CD4-positive, alpha-beta T cell (primary cell): ENCODE measurements at regions of chr19 and their contacts with region 1.

Region 1: DNA sequence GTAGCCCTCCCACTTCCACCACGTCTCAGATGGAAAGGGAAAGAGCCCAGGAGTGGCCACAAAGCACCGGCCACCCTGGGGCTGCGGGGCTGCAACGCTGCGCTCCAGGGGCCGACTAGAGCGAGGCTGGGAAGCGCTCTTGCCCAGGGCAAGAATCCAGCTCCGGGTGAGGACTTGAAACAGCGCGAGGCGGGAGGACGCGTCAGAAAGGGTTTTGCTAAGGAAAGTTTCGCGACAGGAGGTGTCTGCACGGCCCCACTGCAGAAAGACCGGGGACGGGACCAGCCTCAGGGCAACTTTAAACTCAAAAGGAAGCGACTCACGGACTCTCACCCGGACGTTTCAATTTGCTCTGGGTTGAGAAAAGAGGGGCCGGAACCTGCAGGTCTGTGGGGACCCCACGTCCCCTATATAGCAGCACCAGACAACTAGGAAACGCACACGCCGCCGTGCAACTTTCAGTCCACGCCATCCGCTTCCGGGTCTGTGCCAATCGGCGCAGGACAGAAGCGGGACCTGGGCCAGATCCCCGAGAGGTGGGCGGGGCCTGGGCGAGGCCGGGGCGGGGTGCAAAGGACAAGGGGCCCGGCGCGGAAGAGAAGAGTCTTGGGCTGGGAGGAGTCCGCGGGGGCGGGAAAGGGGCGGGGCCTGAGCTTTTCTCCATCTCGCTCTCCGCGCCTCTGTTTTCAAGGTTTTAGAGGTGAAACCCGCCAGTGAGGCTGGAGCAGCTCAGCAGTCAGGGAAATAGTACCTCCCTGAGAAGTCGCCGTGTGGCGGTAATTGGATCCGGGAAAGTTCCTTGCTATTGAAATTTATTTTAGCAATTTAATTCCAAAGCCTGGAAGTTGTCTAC is at the start of gene ZNF816:
- DNase-seq: peak; percentile 97 to 100 (median 99)
- ATAC-seq: peak; percentile 99
- H3K4me3 ChIP-seq: peak within 1 kb of the TSS; percentile 78
- H3K4me3 Mint-ChIP-seq: peak within 1 kb of the TSS; percentile 97
- H3K27ac ChIP-seq: peak within 1 kb of the TSS; percentile 63 to 68
- H3K27ac Mint-ChIP-seq: peak within 1 kb of the TSS; percentile 97
- H3K4me1 ChIP-seq: peaks cover 20% of the 10 kb centered on the region
- H3K4me1 Mint-ChIP-seq: peaks cover 36% of the 10 kb centered on the region
- H3K27me3 ChIP-seq: no peaks in the 10 kb centered on the region
- H3K27me3 Mint-ChIP-seq: no peaks in the 10 kb centered on the region
- CTCF ChIP-seq: no peak
- total RNA-seq, gene ZNF816: 3.6 to 5.5 TPM

Region 2: GRCh38 chr19:52897144-52897935 is 65.3 kb before region 1 on chr19 and contains the start of gene ZNF320:
- CTCF ChIA-PET with region 1: no interaction called
- POLR2A ChIA-PET with region 1: interaction called, 7 read pairs
- intact Hi-C with region 1: loop called (anchors 1 to 10 kb)
- DNase-seq: peak; percentile 77 to 95 (median 86)
- ATAC-seq: peak; percentile 100
- H3K4me3 ChIP-seq: peak within 1 kb of the TSS; percentile 73
- H3K4me3 Mint-ChIP-seq: peak within 1 kb of the TSS; percentile 93
- H3K27ac ChIP-seq: peak within 1 kb of the TSS; percentile 14 to 77
- H3K27ac Mint-ChIP-seq: peak within 1 kb of the TSS; percentile 87
- H3K4me1 ChIP-seq: peaks cover 16% of the 10 kb centered on the region
- H3K4me1 Mint-ChIP-seq: peaks cover 36% of the 10 kb centered on the region
- H3K27me3 ChIP-seq: no peaks in the 10 kb centered on the region
- H3K27me3 Mint-ChIP-seq: no peaks in the 10 kb centered on the region
- CTCF ChIP-seq: no peak
- total RNA-seq, gene ZNF320: 7.2 to 7.4 TPM

Region 3: DNA sequence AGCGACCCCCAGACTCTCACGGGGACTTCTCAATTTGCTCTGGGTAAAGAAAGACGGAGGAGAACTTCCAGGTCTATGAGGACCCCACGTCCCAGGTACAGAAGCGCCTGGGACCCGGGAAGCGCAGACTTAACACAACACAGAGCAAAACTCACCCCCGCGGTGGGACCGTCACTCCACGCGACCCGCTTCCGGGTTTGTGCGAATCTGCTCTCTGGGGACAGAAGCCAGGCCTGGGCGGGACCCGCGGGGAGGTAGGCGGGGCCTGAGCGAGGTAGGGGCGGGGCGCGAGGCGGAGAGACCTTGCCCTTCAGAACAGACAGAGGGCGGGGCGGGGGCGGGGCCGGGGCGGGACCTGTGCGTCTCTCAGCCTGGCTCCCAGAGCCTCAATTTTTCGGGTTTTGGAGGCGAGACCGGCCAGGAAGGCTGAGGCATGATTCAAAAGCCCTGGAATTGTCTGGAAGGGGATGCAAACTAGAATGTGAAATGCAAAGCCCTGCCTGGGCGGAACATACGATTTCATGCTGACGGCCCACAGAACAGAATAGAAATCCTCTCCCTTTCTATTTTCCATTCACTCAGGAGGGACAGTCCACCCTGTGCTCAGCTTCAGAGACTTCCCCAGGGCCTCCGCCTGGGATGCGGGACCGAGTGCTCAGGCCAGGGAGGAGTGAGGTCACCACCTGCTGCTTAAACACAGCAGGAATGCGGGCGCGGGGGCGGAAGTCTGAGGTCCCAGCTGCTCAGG is 20.1 kb before region 1 on chr19:
- CTCF ChIA-PET with region 1: no interaction called
- POLR2A ChIA-PET with region 1: interaction called, 5 read pairs
- intact Hi-C with region 1: loop called (anchors 1 kb)
- DNase-seq: peak; percentile 89 to 97 (median 94)
- ATAC-seq: peak; percentile 99
- H3K4me3 ChIP-seq: peak overlapping the region; percentile 92
- H3K4me3 Mint-ChIP-seq: peak overlapping the region; percentile 97
- H3K27ac ChIP-seq: peak overlapping the region; percentile 35 to 78
- H3K27ac Mint-ChIP-seq: peak overlapping the region; percentile 91
- H3K4me1 ChIP-seq: peaks cover 24% of the 10 kb centered on the region
- H3K4me1 Mint-ChIP-seq: peaks cover 29% of the 10 kb centered on the region
- H3K27me3 ChIP-seq: no peaks in the 10 kb centered on the region
- H3K27me3 Mint-ChIP-seq: no peaks in the 10 kb centered on the region
- CTCF ChIP-seq: no peak

Region 4: DNA sequence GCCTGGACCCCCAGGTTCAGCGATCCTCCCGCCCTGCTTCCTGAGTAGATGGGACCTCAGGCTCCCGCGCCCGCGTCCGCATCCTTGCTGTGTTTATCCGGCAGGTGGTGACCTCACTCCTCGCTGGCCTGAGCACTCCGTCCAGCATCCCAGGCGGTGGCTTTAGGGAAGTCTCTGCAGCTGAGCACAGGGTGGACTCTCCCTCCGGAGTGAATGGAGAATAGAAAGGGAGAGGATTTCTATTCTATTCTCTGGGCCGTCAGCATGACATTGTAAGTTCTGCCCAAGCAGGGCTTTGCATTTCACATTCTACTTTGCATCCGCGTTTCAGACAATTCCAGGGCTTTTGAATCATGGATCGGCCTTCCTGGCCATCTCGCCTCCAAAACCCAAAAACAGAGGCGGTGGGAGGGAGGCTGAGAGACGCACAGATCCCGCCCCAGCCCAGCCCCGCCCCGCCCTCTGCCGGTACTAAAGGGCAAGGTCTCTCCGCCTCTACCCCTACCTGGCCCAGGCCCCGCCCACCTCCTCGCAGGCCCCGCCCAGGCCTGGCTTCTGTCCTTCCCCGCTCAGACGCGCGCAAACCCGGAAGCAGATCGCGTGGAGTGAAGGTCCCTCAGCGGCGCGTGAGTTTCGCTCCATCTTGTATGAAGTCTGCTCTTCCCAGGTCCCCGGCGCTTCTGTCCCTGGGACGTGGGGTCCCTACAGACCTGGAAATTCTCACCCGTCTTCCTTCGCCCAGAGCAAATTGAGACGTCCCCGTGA is 402.7 kb after region 1 on chr19 and contains the start of gene ZNF525:
- CTCF ChIA-PET with region 1: no interaction called
- POLR2A ChIA-PET with region 1: no interaction called
- intact Hi-C with region 1: loop called in 1 of 2 experiments (anchors 10 kb)
- DNase-seq: peak; percentile 95 to 99 (median 97)
- ATAC-seq: peak; percentile 99
- H3K4me3 ChIP-seq: peak within 1 kb of the TSS; percentile 74
- H3K4me3 Mint-ChIP-seq: peak within 1 kb of the TSS; percentile 96
- H3K27ac ChIP-seq: peak within 1 kb of the TSS; percentile 74 to 77
- H3K27ac Mint-ChIP-seq: peak within 1 kb of the TSS; percentile 91
- H3K4me1 ChIP-seq: peaks cover 19% of the 10 kb centered on the region
- H3K4me1 Mint-ChIP-seq: peaks cover 32% of the 10 kb centered on the region
- H3K27me3 ChIP-seq: no peaks in the 10 kb centered on the region
- H3K27me3 Mint-ChIP-seq: no peaks in the 10 kb centered on the region
- CTCF ChIP-seq: peak; percentile 55
- total RNA-seq, gene ZNF525: 13.5 to 16.3 TPM